Stomach (tissue), 19 donors: ENCODE measurements at regions of chr3 and their contacts with region 1.

Region 1: GRCh38 chr3:172836390-172836997 is 86.0 kb downstream of the ECT2 start:
- DNase-seq: peak in 1 of 2 donors; percentile 63
- H3K4me3 ChIP-seq: no peak overlapping the region
- H3K27ac ChIP-seq: no peak overlapping the region
- H3K4me1 ChIP-seq: peaks cover 0 to 15% (median 0%) of the 10 kb centered on the region in 4 donors
- H3K27me3 ChIP-seq: no peaks in the 10 kb centered on the region
- CTCF ChIP-seq: peak in 4 of 7 experiments; percentile 14 to 49 (median 47)
- EP300 ChIP-seq: no peak
- POLR2A ChIP-seq: no peak

Region 2: DNA sequence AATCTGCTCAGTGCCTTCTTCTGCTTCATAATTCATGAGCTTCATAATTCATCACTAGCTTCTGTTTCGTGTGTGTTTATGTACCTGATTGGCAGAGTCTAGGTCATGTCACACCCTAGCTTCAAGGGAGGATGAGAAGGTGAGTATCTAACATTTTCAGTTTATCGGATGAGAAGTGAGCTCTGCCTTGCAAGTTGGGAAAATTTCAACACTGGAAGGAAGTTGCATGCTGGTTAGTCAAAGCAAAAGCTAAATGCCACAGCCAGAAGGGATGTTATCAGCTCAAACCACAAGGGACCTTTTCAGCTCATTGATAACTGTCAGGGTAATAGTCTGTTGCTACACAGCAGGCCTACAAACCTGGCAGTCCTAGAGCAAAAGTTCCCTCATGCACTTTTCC is 305.9 kb before region 1 on chr3:
- intact Hi-C with region 1: no loop called
- DNase-seq: peak in 1 of 2 donors; percentile 47
- H3K4me3 ChIP-seq: no peak overlapping the region
- H3K27ac ChIP-seq: peak overlapping the region in 3 of 5 donors; percentile 5 to 23 (median 10)
- H3K4me1 ChIP-seq: peaks cover 0 to 15% (median 5%) of the 10 kb centered on the region in 4 donors
- H3K27me3 ChIP-seq: no peaks in the 10 kb centered on the region
- CTCF ChIP-seq: no peak
- EP300 ChIP-seq: no peak
- POLR2A ChIP-seq: no peak

Region 3: DNA sequence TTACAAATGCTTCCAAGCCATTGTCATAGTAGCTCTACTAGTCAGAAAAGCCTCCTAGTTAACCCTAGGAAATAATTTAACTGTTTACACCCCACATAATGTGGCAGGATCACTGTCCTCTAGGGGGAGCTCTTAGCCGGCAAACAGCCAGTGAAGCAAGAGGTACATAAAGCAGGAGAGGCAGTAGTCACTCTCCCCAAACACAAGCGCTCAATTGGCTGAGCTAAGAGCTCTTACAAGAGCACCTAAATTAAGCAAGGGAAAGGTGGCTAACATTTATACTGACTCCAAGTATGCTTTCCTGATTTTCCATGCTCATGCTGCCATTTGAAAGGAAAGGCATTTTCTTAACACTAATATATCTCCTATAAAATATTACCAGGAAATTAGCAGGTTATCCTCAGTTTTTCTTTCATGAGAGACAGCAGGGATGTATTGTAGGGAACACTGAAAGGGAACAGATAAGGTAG is 163.2 kb before region 1 on chr3:
- intact Hi-C with region 1: no loop called
- DNase-seq: peak; percentile 73 to 77
- H3K4me3 ChIP-seq: no peak overlapping the region
- H3K27ac ChIP-seq: no peak overlapping the region
- H3K4me1 ChIP-seq: peaks cover 9 to 36% (median 21%) of the 10 kb centered on the region in 4 donors
- H3K27me3 ChIP-seq: no peaks in the 10 kb centered on the region
- CTCF ChIP-seq: peak in 5 of 7 experiments; percentile 25 to 65 (median 52)
- EP300 ChIP-seq: no peak
- POLR2A ChIP-seq: no peak

Region 4: DNA sequence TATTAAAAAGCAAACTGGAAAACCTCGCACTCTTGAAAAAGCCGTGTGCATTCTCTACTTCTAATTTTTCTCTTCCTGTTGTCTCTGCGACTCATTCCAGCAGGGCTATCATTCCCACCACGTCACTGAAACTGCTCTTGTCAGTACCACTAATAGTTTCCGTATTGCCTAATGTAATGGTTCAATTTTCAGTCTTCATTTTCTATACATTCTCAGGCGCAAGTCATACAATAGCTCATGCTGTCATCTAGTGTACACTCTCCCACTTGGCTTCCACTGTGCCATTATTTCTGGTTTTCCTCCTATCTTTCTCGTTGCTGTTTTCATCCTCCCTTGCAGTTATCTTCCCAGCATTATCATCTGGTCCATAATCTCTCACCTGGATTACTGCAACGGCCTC is 144.4 kb after region 1 on chr3:
- intact Hi-C with region 1: no loop called
- DNase-seq: no peak
- H3K4me3 ChIP-seq: no peak overlapping the region
- H3K27ac ChIP-seq: no peak overlapping the region
- H3K4me1 ChIP-seq: no peaks in the 10 kb centered on the region
- H3K27me3 ChIP-seq: no peaks in the 10 kb centered on the region
- CTCF ChIP-seq: no peak
- EP300 ChIP-seq: no peak
- POLR2A ChIP-seq: no peak

Region 5: DNA sequence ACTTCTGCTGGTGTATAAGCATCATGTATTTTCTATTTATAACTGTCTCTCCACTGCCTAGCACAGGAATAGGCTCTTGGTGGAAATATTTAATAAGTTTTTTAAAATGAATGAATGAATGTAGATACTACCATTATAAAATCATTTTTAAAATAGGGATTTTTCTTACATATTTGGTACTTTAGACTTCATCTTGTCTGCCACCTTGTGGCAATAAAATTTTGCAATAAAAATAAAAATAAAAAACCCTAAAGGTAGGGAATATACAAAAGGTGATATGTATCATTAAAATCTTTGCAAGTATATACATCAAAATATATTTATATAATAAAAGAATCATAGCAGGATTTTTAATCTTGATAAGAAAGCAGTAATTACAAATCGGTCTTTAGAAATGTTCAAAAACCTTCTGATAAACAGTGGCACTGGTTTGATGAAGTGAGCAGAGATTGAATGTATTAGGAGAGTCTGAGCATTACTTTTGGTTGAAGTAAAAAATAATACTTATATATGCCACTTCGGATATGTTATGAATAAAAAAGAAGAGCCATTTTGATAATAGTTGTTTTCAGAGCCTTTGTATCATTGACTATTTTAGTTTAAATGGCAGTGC is 209.4 kb after region 1 on chr3:
- intact Hi-C with region 1: loop called (anchors 10 kb)
- DNase-seq: peak in 1 of 2 donors; percentile 12
- H3K4me3 ChIP-seq: no peak overlapping the region
- H3K27ac ChIP-seq: no peak overlapping the region
- H3K4me1 ChIP-seq: no peaks in the 10 kb centered on the region
- H3K27me3 ChIP-seq: no peaks in the 10 kb centered on the region
- CTCF ChIP-seq: peak in 3 of 7 experiments; percentile 15 to 41 (median 27)
- EP300 ChIP-seq: no peak
- POLR2A ChIP-seq: no peak

Region 6: DNA sequence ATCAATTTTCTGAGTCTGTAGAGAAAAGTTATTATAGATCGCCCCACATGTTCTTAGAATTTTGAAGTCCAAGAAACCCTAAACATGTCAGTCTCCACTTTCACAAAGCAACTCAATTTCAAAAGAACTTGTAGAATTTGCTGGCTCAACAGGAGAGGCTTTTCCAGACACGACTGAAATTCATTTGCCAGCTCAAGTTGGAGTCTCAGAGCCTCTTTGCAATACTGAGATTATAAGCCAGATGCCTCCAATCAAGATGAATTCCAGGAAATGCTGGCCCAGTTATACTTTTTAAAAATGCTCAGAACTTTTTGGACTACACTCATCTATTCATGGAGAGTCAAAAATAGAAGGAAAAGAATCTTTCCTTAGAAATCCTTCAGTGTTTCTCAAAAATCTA is 504.1 kb after region 1 on chr3:
- intact Hi-C with region 1: no loop called
- DNase-seq: peak in 1 of 2 donors; percentile 33
- H3K4me3 ChIP-seq: no peak overlapping the region
- H3K27ac ChIP-seq: no peak overlapping the region
- H3K4me1 ChIP-seq: no peaks in the 10 kb centered on the region
- H3K27me3 ChIP-seq: no peaks in the 10 kb centered on the region
- CTCF ChIP-seq: no peak
- EP300 ChIP-seq: no peak
- POLR2A ChIP-seq: no peak